Activated CD8-positive, alpha-beta T cell treated with anti-CD3 and anti-CD28 coated beads, Interleukin-2, amount 10 ng/mL, durations not matched to agents 7 days and 5 days (primary cell): ENCODE measurements at regions of chr1 and their contacts with region 1.

Region 1: GRCh38 chr1:8987881-8988617 is 38.2 kb downstream of the SLC2A7 start:
- DNase-seq: peak; percentile 76
- ATAC-seq: peak; percentile 62
- H3K4me3 Mint-ChIP-seq: peak overlapping the region; percentile 48
- H3K27ac Mint-ChIP-seq: peak overlapping the region; percentile 94
- H3K4me1 Mint-ChIP-seq: peaks cover 62% of the 10 kb centered on the region
- H3K27me3 Mint-ChIP-seq: no peaks in the 10 kb centered on the region

Region 2: DNA sequence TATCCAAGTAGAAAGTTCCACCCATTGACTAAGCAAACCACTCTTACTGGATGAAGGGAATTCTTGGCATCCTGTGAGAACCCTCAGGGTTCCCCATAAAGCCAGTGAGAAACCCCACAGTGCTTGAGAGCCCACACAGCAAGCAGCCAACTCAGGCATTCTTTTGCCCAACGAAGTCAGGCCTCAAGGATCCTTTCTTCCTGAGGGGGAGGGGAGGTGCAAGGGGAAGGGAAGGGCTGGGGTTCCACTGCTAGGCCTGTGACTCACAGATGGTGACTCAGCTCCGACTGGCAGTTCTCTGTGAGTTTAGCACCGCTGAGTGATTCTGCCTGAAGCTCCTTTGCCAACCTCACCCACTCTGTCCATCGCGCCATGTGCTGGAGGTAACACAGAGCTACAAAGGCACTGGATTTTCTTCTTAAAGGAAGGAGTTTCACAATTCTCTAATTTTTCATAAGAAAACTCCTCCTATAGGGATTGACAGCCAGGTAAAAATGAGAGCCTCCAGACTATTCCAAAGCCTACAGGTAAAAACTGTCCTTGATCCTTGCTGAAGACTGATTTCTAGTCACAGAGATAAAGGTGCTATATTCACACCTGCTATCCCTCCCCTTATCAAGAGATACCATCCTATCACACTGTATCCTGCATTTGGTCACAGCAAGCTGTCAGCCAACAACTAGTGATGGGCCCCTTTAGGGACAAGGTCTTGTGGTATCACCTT is 114.4 kb before region 1 on chr1:
- CTCF ChIA-PET with region 1: interaction called, 11 read pairs
- POLR2A ChIA-PET with region 1: interaction called, 25 read pairs
- DNase-seq: peak; percentile 77
- ATAC-seq: peak; percentile 18
- H3K4me3 Mint-ChIP-seq: peak overlapping the region; percentile 97
- H3K27ac Mint-ChIP-seq: peak overlapping the region; percentile 71
- H3K4me1 Mint-ChIP-seq: peaks cover 65% of the 10 kb centered on the region
- H3K27me3 Mint-ChIP-seq: no peaks in the 10 kb centered on the region

Region 3: GRCh38 chr1:8910914-8911313 is 77.1 kb before region 1 on chr1:
- CTCF ChIA-PET with region 1: interaction called, 183 read pairs
- POLR2A ChIA-PET with region 1: interaction called, 3 read pairs
- DNase-seq: no peak
- ATAC-seq: no peak
- H3K4me3 Mint-ChIP-seq: no peak overlapping the region
- H3K27ac Mint-ChIP-seq: peak overlapping the region; percentile 74
- H3K4me1 Mint-ChIP-seq: peaks cover 54% of the 10 kb centered on the region
- H3K27me3 Mint-ChIP-seq: no peaks in the 10 kb centered on the region

Region 4: DNA sequence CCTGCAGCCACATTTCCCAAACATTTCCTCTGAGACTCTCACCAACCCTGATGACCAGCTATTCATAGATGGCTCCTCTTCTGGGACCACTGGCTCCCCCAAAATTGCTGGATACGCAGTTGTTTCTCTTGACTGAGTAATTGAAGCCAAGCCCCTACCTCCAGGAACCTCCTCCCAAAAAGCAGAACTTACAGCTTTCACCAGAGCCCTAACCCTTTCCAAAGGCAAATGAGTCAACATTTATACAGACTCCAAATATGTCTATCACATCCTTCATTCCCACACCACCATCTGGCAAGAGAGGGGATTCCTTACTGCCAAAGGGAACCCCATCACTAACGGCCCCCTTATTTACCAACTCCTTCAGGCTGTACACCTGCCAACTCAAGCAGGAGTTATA is 62.6 kb before region 1 on chr1:
- CTCF ChIA-PET with region 1: interaction called, 183 read pairs
- POLR2A ChIA-PET with region 1: interaction called, 75 read pairs
- DNase-seq: no peak
- ATAC-seq: no peak
- H3K4me3 Mint-ChIP-seq: no peak overlapping the region
- H3K27ac Mint-ChIP-seq: no peak overlapping the region
- H3K4me1 Mint-ChIP-seq: peaks cover 39% of the 10 kb centered on the region
- H3K27me3 Mint-ChIP-seq: no peaks in the 10 kb centered on the region

Region 5: DNA sequence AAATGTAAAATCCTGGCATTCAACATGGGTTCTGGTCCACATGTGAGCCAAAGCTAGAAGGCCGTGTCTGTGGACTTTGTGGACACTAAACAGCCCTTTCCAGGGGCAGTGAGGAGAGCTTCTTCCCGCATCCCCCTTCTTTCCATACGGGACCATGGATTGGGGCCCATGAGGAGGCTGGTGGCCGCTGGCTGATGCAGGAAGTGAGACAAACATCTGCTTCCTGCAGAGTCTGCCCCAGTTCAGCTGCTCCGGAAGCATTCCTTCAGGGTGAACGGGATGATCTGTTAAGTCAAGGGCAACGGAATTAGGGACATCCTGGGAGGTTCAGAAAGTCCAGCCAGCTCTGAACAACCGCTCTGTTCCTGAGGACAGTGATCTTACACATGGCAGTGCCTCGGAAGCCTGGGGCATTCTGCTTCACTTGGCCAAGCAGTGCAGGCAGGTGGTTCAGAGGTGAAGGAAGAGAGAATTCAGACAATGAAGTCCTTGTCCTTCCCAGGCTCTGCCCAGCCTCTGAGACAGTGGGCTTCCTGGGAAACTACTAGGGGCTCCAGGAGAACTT is 40.8 kb before region 1 on chr1:
- CTCF ChIA-PET with region 1: interaction called, 31 read pairs
- POLR2A ChIA-PET with region 1: interaction called, 21 read pairs
- DNase-seq: peak; percentile 51
- ATAC-seq: peak; percentile 9
- H3K4me3 Mint-ChIP-seq: peak overlapping the region; percentile 65
- H3K27ac Mint-ChIP-seq: peak overlapping the region; percentile 97
- H3K4me1 Mint-ChIP-seq: peaks cover 93% of the 10 kb centered on the region
- H3K27me3 Mint-ChIP-seq: no peaks in the 10 kb centered on the region

Region 6: GRCh38 chr1:8962812-8963530 is 25.1 kb before region 1 on chr1:
- CTCF ChIA-PET with region 1: interaction called, 232 read pairs
- POLR2A ChIA-PET with region 1: interaction called, 15 read pairs
- DNase-seq: peak; percentile 80
- ATAC-seq: peak; percentile 42
- H3K4me3 Mint-ChIP-seq: peak overlapping the region; percentile 99
- H3K27ac Mint-ChIP-seq: peak overlapping the region; percentile 85
- H3K4me1 Mint-ChIP-seq: peaks cover 83% of the 10 kb centered on the region
- H3K27me3 Mint-ChIP-seq: no peaks in the 10 kb centered on the region

Region 7: GRCh38 chr1:8970870-8971337 is 17.1 kb before region 1 on chr1:
- CTCF ChIA-PET with region 1: interaction called, 232 read pairs
- POLR2A ChIA-PET with region 1: interaction called, 26 read pairs
- DNase-seq: peak; percentile 83
- ATAC-seq: peak; percentile 84
- H3K4me3 Mint-ChIP-seq: peak overlapping the region; percentile 99
- H3K27ac Mint-ChIP-seq: peak overlapping the region; percentile 98
- H3K4me1 Mint-ChIP-seq: peaks cover 32% of the 10 kb centered on the region
- H3K27me3 Mint-ChIP-seq: no peaks in the 10 kb centered on the region